ENCODE measurements at regions of chr1 and their contacts with region 1.

Region 1: DNA sequence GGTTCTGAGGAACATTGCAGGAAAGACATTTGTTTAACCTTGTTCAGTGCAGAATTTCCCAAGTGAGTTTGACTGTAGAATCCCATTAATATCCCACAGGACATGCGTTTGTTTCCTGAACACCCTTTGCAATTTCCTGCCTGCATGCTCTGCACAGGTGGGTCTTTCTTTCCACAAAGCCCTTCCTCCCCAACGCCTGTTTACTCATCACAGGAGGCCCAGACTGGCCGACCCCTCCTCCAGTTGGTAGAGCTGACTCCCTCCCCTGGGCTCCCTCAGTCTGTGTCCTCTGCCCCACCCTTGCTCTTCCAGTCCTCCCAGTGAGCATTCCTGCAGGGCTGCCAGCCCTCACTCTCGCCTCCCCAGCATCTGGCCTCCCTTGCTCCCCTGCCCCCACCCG is 47.5 kb upstream of the CTPS1 start:
- DNase-seq: no peak
- ATAC-seq: no peak

Region 2: DNA sequence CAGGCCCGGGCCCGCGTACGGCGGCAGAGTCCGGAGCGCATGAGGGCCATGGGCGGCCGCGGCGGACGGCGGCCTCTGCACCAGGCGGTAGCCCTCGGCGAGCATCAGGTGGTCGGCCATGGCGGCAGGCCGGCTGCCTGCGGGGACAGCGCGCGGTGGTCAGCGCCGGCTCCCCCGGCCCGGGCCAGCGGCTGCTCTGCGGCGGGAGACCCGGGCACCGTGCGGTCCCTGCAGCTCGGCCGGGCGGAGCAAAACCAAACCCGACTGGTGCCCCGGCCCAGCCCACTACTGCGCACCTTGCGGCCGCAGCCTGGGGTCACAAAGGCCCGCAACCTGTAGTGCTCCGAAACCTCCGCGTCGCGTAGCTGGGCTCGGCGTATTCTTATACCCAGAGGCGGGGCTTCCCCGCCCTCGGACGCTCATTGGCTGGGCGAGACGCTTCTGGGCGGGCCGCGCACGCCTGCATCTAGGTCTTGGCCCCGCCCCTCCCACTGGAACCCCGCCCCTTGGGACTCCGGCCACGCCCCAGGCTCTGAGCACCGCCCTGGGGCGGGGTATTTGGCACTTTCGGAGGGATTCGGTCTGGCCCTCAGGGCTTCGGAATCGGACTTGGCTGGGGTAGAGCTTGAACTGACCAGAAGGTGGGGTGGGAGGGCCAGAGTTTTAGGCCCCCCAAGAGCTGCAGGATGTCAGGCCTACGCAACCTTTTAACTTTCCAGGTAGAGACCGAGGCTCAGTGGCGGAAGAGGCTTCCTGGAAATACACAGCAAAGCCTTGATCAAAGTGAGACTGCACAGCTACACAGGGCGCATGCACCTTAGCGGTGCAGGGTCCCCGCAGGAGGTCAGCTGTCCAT is 69.8 kb before region 1 on chr1 and contains the start of gene CITED4:
- intact Hi-C with region 1: loop called (anchors 5 kb)
- DNase-seq: peak; percentile 98
- ATAC-seq: peak; percentile 95
- total RNA-seq, gene CITED4: 40.6 TPM

Region 3: GRCh38 chr1:40886318-40887011 is 45.6 kb before region 1 on chr1:
- intact Hi-C with region 1: no loop called
- DNase-seq: no peak
- ATAC-seq: no peak

Measured in Right ventricle myocardium inferior (tissue), 1 donor.